ENCODE measurements at regions of chr17 and their contacts with region 1.

Region 1: GRCh38 chr17:29180034-29180787 is at the start of gene MYO18A:
- DNase-seq: peak; percentile 74 to 87 (median 80)
- H3K4me3 ChIP-seq: peak within 1 kb of the TSS; percentile 71
- H3K27ac ChIP-seq: peak within 1 kb of the TSS; percentile 74 to 78
- H3K4me1 ChIP-seq: peaks cover 21% of the 10 kb centered on the region
- H3K27me3 ChIP-seq: no peaks in the 10 kb centered on the region
- CTCF ChIP-seq: peak; percentile 70 to 97 (median 94)
- EP300 ChIP-seq: no peak
- POLR2A ChIP-seq: peak; percentile 39
- total RNA-seq, gene MYO18A: 23.0 to 53.9 (median 35.3) TPM

Region 2: DNA sequence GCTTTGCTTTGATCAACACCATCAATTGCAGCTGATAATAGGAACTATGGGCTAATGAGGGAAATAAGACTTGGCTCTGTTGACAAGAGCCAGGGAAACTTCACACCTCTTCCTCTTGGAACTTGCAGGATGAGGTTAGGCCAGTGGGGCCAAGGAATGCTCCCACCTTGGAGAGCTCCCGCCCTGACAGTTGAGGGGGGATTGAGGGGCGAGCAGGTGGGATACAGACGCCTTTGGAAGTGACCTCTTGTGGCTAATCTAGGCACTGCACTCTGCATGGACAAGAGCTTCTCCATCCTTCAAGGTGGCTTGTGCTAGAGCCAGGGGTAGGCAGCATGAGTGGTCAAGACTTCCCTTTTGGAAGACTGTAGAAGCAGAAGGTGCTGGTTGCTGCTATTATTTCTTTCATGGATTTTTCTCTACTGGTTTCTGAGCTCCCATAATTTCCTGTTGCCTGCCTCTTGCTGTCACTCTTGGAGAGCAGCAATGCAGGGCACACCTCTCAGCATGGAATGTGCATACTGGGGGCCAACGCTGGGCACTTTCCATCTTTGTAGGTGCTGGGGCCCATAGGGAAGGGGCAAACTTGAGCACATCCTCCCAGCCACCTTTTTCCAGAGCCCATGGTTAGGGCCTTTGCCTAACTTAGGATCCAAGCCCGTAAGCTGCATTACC is 226.6 kb before region 1 on chr17:
- intact Hi-C with region 1: no loop called
- DNase-seq: peak; percentile 44 to 71 (median 57)
- H3K4me3 ChIP-seq: no peak overlapping the region
- H3K27ac ChIP-seq: no peak overlapping the region
- H3K4me1 ChIP-seq: no peaks in the 10 kb centered on the region
- H3K27me3 ChIP-seq: no peaks in the 10 kb centered on the region
- CTCF ChIP-seq: peak; percentile 56 to 65 (median 64)
- EP300 ChIP-seq: no peak
- POLR2A ChIP-seq: no peak

Region 3: DNA sequence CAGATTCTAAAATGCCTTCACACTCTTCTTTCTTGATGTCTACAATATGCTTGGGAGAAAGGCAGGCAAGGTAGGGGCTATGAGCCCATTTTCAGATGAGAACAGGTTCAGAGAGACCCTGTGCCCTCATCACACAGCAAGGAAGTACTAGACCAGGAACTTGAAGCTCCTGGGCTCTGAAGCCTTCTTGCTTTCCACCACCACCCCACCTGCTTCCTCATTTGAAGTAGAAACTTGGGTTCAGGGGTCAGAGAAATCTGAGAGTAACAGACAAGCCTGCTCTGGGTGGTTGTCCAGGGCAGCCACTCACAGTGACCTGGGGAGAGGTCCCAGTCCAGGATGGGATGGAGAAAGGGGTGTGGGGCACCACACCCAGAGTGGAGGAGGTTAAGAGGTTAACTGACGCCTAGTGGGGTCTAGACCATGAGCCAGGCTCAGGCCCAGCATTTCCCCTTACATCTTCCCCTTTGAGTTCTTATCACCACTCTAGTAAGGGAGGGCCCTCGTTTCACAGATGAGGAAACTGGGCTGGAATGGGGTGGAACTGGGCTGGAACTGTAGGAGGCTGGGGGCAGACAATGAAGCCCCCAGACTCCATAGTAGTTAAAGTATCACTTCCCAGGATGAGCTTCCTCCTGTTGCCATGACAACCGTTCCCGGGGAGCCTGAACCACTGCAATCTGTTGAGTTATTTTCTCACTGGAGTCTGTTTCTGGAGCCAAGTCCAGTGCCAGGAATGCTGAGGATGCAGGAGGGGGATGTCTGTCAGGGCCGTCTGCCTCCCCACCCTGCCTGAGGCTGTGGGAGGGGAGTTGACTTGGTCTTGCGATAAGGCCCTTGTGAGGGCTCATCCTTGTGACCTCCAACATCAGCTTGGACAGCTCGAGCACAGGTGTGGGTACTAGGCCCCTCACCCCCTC is 212.7 kb before region 1 on chr17:
- intact Hi-C with region 1: no loop called
- DNase-seq: no peak
- H3K4me3 ChIP-seq: no peak overlapping the region
- H3K27ac ChIP-seq: no peak overlapping the region
- H3K4me1 ChIP-seq: peaks cover 11% of the 10 kb centered on the region
- H3K27me3 ChIP-seq: no peaks in the 10 kb centered on the region
- CTCF ChIP-seq: no peak
- EP300 ChIP-seq: no peak
- POLR2A ChIP-seq: no peak

Region 4: DNA sequence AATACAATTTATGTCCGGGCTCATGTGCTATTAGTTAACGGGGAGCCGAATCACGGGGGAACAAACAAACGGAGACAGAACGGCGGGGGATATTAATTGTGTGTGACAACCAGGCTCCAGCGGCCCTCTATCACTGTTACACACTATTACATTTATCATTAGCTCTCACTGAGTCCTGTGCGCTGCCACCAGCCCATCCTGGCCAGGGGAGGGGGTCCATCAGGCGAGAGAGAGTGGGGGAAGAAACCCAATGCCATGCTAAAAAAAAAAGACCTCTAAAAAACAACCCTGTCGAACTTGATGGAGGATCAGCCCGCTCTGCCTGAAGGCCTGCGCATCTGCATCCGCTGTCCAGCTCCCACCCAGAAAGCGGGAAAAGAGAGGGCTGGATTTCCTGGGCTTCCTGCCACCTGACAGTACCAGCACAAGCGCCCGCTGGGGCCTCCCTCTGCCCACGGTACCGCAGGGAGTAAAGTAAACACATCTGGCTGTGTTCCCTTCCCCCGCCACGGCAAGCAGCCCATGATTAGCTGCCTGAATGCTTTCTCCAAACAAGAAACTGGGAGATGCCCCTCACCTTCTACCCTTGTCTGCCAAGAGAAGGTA is 95.6 kb before region 1 on chr17:
- intact Hi-C with region 1: no loop called
- DNase-seq: no peak
- H3K4me3 ChIP-seq: no peak overlapping the region
- H3K27ac ChIP-seq: no peak overlapping the region
- H3K4me1 ChIP-seq: no peaks in the 10 kb centered on the region
- H3K27me3 ChIP-seq: no peaks in the 10 kb centered on the region
- CTCF ChIP-seq: no peak
- EP300 ChIP-seq: no peak
- POLR2A ChIP-seq: no peak

Region 5: DNA sequence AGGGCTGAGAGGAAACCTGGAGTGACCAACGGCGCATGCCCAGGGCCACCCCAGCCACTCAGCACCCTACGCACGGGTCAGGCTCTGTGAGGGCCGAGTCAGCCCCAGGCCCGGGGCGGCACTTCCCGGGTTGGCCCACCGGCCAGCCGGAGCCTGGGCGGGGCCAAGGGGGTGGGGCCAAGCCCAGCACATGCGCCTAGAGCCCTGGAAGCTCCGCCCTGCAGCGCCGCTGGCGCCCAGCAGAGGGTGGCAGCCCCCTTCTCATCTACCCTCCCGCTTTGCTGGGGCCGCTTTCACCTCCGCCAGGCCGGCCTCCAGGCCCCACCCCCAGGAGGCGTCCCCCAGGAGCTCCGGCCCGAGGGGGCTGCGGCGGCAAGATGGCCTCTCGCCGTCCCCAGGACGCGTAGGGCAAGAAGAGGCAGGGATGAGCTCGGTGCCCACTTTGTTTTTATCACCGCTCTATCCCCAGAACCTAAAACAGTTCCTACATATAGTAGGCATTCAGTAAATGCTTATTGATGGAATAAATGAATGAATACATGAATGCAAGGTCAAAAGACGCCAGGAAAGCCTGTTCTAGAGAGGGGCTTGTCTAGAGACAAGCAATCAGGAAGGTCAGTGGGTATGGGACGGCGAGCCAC is 31.3 kb before region 1 on chr17:
- intact Hi-C with region 1: loop called in 2 of 4 experiments (anchors 2 kb)
- DNase-seq: peak; percentile 90 to 97 (median 94)
- H3K4me3 ChIP-seq: peak overlapping the region; percentile 54
- H3K27ac ChIP-seq: peak overlapping the region; percentile 53 to 77
- H3K4me1 ChIP-seq: peaks cover 7% of the 10 kb centered on the region
- H3K27me3 ChIP-seq: no peaks in the 10 kb centered on the region
- CTCF ChIP-seq: peak; percentile 97
- EP300 ChIP-seq: no peak
- POLR2A ChIP-seq: peak; percentile 5

Region 6: GRCh38 chr17:29212681-29213121 is 32.5 kb after region 1 on chr17:
- intact Hi-C with region 1: no loop called
- DNase-seq: no peak
- H3K4me3 ChIP-seq: no peak overlapping the region
- H3K27ac ChIP-seq: no peak overlapping the region
- H3K4me1 ChIP-seq: no peaks in the 10 kb centered on the region
- H3K27me3 ChIP-seq: no peaks in the 10 kb centered on the region
- CTCF ChIP-seq: no peak
- EP300 ChIP-seq: no peak
- POLR2A ChIP-seq: no peak